Left ventricle myocardium inferior (tissue), 1 donor: ENCODE measurements at regions of chr1 and their contacts with region 1.

Region 1: DNA sequence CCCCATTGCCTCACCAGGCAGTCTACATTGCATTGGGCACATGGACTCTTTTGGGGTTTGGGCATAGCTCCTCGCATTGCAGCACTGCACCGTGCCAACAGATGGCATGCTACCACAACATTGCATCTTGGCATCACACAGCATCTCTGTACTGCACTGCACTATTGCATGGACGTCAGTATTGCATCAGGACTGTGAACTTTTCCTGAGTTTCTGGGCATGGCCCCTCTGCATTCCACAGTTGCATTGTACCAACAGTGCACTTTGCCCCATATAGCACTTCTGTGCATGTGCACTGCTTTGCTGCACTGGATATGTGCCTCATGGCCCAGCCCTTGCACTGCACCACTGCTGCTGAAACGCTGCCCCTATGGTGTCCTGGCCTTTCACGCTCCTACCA is 9.6 kb downstream of the PTPRU start:
- DNase-seq: no peak
- H3K4me3 ChIP-seq: no peak overlapping the region
- H3K27ac ChIP-seq: no peak overlapping the region
- H3K4me1 ChIP-seq: no peaks in the 10 kb centered on the region
- H3K27me3 ChIP-seq: no peaks in the 10 kb centered on the region
- CTCF ChIP-seq: peak; percentile 46

Region 2: GRCh38 chr1:29136391-29136915 is 109.4 kb before region 1 on chr1:
- intact Hi-C with region 1: no loop called
- DNase-seq: no peak
- H3K4me3 ChIP-seq: no peak overlapping the region
- H3K27ac ChIP-seq: no peak overlapping the region
- H3K4me1 ChIP-seq: peaks cover 9% of the 10 kb centered on the region
- H3K27me3 ChIP-seq: peaks cover 14% of the 10 kb centered on the region
- CTCF ChIP-seq: no peak

Region 3: DNA sequence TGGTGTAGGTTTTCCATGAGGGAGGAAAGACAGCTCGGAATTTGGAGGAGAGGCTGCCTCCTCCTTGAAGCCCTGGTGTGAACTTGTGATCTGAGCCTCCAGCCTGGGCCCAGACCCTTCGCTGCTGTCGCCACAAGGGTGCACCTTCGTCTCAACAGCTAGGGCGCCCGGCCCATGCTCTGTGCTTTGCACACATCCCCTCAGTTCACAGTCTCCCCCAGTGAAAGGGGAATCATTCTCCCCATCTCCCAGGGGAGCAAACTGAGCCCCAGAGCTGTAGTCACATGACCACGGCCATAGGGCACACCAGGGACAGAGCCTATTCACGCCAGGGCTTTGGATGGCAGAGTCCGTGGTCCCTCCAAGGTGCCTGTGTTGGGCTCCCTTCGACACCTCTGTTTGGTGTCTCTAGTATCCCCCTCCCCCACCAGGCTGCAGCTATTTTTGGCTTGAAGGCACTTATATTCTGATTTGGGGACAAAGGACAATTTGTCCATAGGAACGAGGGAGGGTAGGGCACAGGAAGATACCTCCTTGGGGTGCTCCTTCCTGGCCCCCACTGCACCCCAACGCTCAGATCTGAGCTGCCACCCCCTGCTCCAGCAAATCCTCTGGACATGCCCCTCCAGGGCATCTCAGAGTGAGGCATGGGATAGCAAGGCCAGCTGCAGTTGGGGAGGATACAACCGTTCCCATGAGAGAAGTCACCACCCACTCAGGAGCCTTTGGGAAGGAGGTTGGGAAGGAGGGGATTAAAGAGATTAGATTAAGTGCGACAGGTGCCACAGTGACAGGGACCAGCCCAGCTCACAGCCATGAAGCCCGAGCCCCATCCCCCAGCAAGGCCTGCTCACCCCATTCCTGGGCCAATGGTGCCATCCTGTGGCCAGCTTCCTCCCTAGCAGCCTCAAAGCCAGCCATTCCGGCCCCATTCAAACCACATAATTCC is 1461.8 kb after region 1 on chr1:
- intact Hi-C with region 1: loop called (anchors 10 kb)
- DNase-seq: peak; percentile 67
- H3K4me3 ChIP-seq: no peak overlapping the region
- H3K27ac ChIP-seq: no peak overlapping the region
- H3K4me1 ChIP-seq: peaks cover 36% of the 10 kb centered on the region
- H3K27me3 ChIP-seq: peaks cover 25% of the 10 kb centered on the region
- CTCF ChIP-seq: peak; percentile 82